ENCODE measurements at regions of chr2 and their contacts with region 1.

Region 1: DNA sequence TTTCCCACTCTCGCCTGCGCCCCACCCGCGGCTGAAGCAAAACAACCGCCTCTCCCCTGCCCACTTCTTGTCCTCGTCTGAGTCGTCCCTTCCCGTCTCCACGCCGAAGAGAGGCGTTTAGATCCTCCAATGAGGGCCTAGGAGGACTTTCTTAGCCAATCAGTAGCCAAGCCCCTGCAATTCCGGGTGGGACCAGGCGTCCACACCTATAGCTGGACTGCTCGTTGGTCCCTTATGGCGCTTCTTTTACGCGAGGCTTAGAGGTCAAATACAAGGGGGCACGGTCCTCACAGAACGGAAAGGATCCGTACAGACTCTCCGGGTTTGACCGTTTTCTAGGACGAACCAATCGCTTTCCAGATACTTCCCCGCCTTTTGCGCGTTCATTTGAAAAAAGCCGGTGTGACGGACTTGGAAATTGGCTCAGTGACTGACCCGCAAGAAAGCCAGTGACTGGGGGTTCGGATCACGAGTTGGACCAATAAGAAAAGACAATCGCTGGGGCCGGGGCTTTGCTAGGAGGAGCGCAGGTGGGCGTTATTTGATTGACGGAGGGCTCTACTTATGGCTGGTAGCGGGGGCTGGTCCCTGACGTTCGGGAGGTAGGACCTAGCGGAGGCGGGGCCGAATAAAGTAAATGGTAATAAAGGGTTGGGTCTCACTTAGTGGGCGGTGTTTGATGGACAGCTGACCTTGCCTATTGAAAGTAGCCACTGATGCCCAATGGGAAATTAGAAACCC is 565 bp upstream of the PPM1B start:
- DNase-seq: peak; percentile 100
- H3K4me3 Mint-ChIP-seq: peak overlapping the region; percentile 93
- H3K27ac Mint-ChIP-seq: peak overlapping the region; percentile 99
- H3K4me1 Mint-ChIP-seq: peaks cover 11% of the 10 kb centered on the region
- H3K27me3 Mint-ChIP-seq: no peaks in the 10 kb centered on the region
- CTCF ChIP-seq: no peak

Region 2: GRCh38 chr2:43637030-43637803 is 530.9 kb before region 1 on chr2 and contains the start of gene PLEKHH2:
- CTCF ChIA-PET with region 1: no interaction called
- POLR2A ChIA-PET with region 1: no interaction called
- intact Hi-C with region 1: no loop called
- DNase-seq: peak; percentile 84
- H3K4me3 Mint-ChIP-seq: peak within 1 kb of the TSS; percentile 82
- H3K27ac Mint-ChIP-seq: no peak within 1 kb of the TSS
- H3K4me1 Mint-ChIP-seq: peaks cover 21% of the 10 kb centered on the region
- H3K27me3 Mint-ChIP-seq: peaks cover 22% of the 10 kb centered on the region
- CTCF ChIP-seq: no peak
- total RNA-seq, gene PLEKHH2: 0.93 and 1.2 TPM in 2 replicates

Region 3: GRCh38 chr2:43977677-43978375 is 190.3 kb before region 1 on chr2:
- CTCF ChIA-PET with region 1: no interaction called
- POLR2A ChIA-PET with region 1: no interaction called
- intact Hi-C with region 1: no loop called
- DNase-seq: no peak
- H3K4me3 Mint-ChIP-seq: no peak overlapping the region
- H3K27ac Mint-ChIP-seq: peak overlapping the region; percentile 51
- H3K4me1 Mint-ChIP-seq: no peaks in the 10 kb centered on the region
- H3K27me3 Mint-ChIP-seq: no peaks in the 10 kb centered on the region
- CTCF ChIP-seq: no peak

Region 4: GRCh38 chr2:44155666-44156446 is 12.3 kb before region 1 on chr2:
- CTCF ChIA-PET with region 1: no interaction called
- POLR2A ChIA-PET with region 1: interaction called, 10 read pairs
- intact Hi-C with region 1: no loop called
- DNase-seq: no peak
- H3K4me3 Mint-ChIP-seq: no peak overlapping the region
- H3K27ac Mint-ChIP-seq: no peak overlapping the region
- H3K4me1 Mint-ChIP-seq: no peaks in the 10 kb centered on the region
- H3K27me3 Mint-ChIP-seq: no peaks in the 10 kb centered on the region
- CTCF ChIP-seq: no peak

Region 5: GRCh38 chr2:44254023-44254422 is 85.9 kb after region 1 on chr2:
- CTCF ChIA-PET with region 1: no interaction called
- POLR2A ChIA-PET with region 1: no interaction called
- intact Hi-C with region 1: no loop called
- DNase-seq: no peak
- H3K4me3 Mint-ChIP-seq: no peak overlapping the region
- H3K27ac Mint-ChIP-seq: no peak overlapping the region
- H3K4me1 Mint-ChIP-seq: no peaks in the 10 kb centered on the region
- H3K27me3 Mint-ChIP-seq: no peaks in the 10 kb centered on the region
- CTCF ChIP-seq: no peak

Region 6: GRCh38 chr2:44941551-44942234 is 773.6 kb after region 1 on chr2 and contains the start of gene SIX3:
- CTCF ChIA-PET with region 1: no interaction called
- POLR2A ChIA-PET with region 1: no interaction called
- intact Hi-C with region 1: no loop called
- DNase-seq: no peak
- H3K4me3 Mint-ChIP-seq: peak within 1 kb of the TSS; percentile 41
- H3K27ac Mint-ChIP-seq: no peak within 1 kb of the TSS
- H3K4me1 Mint-ChIP-seq: peaks cover 8% of the 10 kb centered on the region
- H3K27me3 Mint-ChIP-seq: peaks cover 36% of the 10 kb centered on the region
- CTCF ChIP-seq: no peak
- total RNA-seq, gene SIX3: not detected in 2 replicates